CD8-positive, alpha-beta T cell (primary cell): ENCODE measurements at regions of chr2 and their contacts with region 1.

Region 1: DNA sequence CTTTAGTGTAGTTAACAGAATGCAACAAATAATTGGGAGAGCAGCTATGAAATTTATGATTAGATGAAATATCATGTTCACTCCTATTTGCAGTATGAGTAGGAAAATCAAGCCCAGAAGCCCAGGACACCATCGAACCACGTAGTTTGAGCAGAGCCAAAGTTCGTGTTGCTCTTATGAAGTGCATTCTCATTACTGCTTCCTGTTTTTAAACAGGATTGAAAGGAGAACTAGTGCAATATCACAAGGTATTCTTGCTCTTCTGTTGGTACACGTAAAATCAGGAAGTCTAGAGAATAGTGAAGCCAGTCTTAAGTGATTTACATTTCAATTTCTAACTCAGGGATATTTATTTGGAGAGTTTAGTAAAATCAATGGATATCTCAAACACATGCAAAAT is 21.1 kb downstream of the ARHGAP15 start:
- DNase-seq: peak in 1 of 9 experiments; percentile 43
- ATAC-seq: peak; percentile 47
- H3K4me3 ChIP-seq: no peak overlapping the region
- H3K4me3 Mint-ChIP-seq: peak overlapping the region; percentile 53
- H3K27ac ChIP-seq: peak overlapping the region; percentile 2 to 38
- H3K27ac Mint-ChIP-seq: peak overlapping the region; percentile 85
- H3K4me1 ChIP-seq: peaks cover 90% of the 10 kb centered on the region
- H3K4me1 Mint-ChIP-seq: peaks cover 87% of the 10 kb centered on the region
- H3K27me3 ChIP-seq: no peaks in the 10 kb centered on the region
- H3K27me3 Mint-ChIP-seq: no peaks in the 10 kb centered on the region
- CTCF ChIP-seq: no peak

Region 2: DNA sequence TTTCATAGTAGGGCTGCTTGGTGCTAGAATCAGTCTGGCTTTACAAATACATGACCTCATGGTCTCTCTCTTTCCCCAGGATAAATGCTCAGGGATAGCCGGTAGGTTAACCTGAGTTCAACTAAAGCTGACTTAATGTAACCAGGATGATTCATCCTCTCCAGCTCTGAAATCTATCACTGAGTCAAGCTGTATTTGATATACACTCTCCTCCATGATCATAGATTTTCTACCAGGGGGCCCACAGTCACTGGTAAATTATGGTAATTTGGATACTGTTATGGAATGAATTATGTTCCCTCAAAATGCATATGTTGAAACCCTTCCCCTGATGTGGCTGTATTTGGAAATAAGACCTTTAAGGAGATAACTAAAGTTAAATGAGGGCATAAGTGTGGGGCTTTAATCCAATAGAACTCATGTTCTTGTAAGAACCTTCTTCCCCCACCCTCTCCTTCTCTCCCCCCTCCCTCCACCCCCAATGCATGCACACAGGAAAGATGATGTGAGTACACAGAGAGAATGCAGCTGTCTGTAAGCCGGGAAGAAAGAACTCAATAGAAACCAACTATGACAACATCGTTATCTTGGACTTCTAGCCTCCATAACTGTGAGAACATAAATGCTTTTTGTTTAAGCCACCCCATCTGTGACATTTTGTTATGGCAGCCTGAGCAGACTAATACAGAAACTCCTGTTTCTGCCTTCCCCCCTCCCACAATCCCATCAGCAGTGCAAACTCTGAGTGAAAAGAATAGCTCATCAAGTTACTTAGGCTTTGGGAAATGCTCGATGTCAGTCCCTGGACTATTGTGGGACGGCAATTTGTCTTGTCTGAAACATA is 407.7 kb before region 1 on chr2:
- CTCF ChIA-PET with region 1: no interaction called
- POLR2A ChIA-PET with region 1: no interaction called
- intact Hi-C with region 1: no loop called
- DNase-seq: no peak
- ATAC-seq: no peak
- H3K4me3 ChIP-seq: no peak overlapping the region
- H3K4me3 Mint-ChIP-seq: no peak overlapping the region
- H3K27ac ChIP-seq: no peak overlapping the region
- H3K27ac Mint-ChIP-seq: no peak overlapping the region
- H3K4me1 ChIP-seq: no peaks in the 10 kb centered on the region
- H3K4me1 Mint-ChIP-seq: no peaks in the 10 kb centered on the region
- H3K27me3 ChIP-seq: no peaks in the 10 kb centered on the region
- H3K27me3 Mint-ChIP-seq: no peaks in the 10 kb centered on the region
- CTCF ChIP-seq: no peak

Region 3: GRCh38 chr2:143034292-143035074 is 115.8 kb before region 1 on chr2:
- CTCF ChIA-PET with region 1: no interaction called
- POLR2A ChIA-PET with region 1: no interaction called
- intact Hi-C with region 1: loop called in 1 of 2 experiments (anchors 5 kb)
- DNase-seq: peak in 8 of 9 experiments; percentile 32 to 88 (median 56)
- ATAC-seq: peak; percentile 100
- H3K4me3 ChIP-seq: no peak overlapping the region
- H3K4me3 Mint-ChIP-seq: no peak overlapping the region
- H3K27ac ChIP-seq: no peak overlapping the region
- H3K27ac Mint-ChIP-seq: no peak overlapping the region
- H3K4me1 ChIP-seq: no peaks in the 10 kb centered on the region
- H3K4me1 Mint-ChIP-seq: no peaks in the 10 kb centered on the region
- H3K27me3 ChIP-seq: no peaks in the 10 kb centered on the region
- H3K27me3 Mint-ChIP-seq: peaks cover 6% of the 10 kb centered on the region
- CTCF ChIP-seq: peak; percentile 99

Region 4: DNA sequence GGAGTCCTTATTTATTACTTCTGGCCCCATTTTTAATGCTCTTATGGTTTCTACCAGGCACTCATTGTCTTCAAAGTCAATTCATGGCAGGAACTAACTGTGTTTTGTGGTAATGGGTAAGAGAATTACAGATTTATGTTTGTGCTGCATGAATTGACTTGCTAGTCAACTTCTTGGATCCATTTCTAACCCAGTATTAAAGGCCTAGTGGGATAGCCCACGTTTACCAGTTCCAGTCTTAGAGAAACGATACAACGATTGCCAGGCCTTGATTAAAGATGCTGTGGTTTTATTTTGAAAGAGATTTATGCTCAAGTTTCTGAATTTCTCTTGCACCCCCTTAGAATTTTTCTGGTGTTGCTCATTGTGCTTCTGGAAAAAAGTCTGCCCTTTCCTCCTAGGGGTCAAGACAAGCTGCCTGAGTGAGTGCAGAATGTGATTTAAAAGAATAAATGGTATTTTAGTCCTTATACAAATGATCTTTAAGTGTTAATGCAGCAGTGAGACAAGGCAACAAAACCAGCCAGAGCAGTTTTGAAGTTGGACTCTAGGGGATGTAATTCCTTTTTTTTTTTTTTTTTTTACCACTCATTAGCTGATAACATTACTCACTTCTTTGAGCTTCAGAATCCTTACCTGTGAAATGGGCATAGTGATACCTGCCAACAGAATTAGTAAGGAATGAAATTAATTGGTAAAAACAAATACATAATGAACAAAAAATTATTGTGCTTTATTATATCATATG is 80.4 kb after region 1 on chr2:
- CTCF ChIA-PET with region 1: no interaction called
- POLR2A ChIA-PET with region 1: no interaction called
- intact Hi-C with region 1: no loop called
- DNase-seq: no peak
- ATAC-seq: no peak
- H3K4me3 ChIP-seq: no peak overlapping the region
- H3K4me3 Mint-ChIP-seq: no peak overlapping the region
- H3K27ac ChIP-seq: no peak overlapping the region
- H3K27ac Mint-ChIP-seq: peak overlapping the region; percentile 3
- H3K4me1 ChIP-seq: peaks cover 18% of the 10 kb centered on the region
- H3K4me1 Mint-ChIP-seq: peaks cover 39% of the 10 kb centered on the region
- H3K27me3 ChIP-seq: no peaks in the 10 kb centered on the region
- H3K27me3 Mint-ChIP-seq: no peaks in the 10 kb centered on the region
- CTCF ChIP-seq: no peak

Region 5: GRCh38 chr2:143649226-143649740 is 499.0 kb after region 1 on chr2:
- CTCF ChIA-PET with region 1: no interaction called
- POLR2A ChIA-PET with region 1: no interaction called
- intact Hi-C with region 1: no loop called
- DNase-seq: no peak
- ATAC-seq: no peak
- H3K4me3 ChIP-seq: no peak overlapping the region
- H3K4me3 Mint-ChIP-seq: no peak overlapping the region
- H3K27ac ChIP-seq: no peak overlapping the region
- H3K27ac Mint-ChIP-seq: no peak overlapping the region
- H3K4me1 ChIP-seq: no peaks in the 10 kb centered on the region
- H3K4me1 Mint-ChIP-seq: peaks cover 9% of the 10 kb centered on the region
- H3K27me3 ChIP-seq: no peaks in the 10 kb centered on the region
- H3K27me3 Mint-ChIP-seq: no peaks in the 10 kb centered on the region
- CTCF ChIP-seq: no peak